Gastrocnemius medialis (tissue), 4 donors: ENCODE measurements at regions of chr6 and their contacts with region 1.

Region 1: GRCh38 chr6:139764498-139764986 is 390.1 kb upstream of the CITED2 start:
- DNase-seq: peak; percentile 76 to 85
- ATAC-seq: peak; percentile 95 to 98
- H3K4me3 ChIP-seq: no peak overlapping the region
- H3K27ac ChIP-seq: peak overlapping the region; percentile 84 to 93 (median 89)
- H3K4me1 ChIP-seq: peaks cover 50 to 55% of the 10 kb centered on the region in 2 donors
- H3K27me3 ChIP-seq: no peaks in the 10 kb centered on the region
- CTCF ChIP-seq: no peak
- POLR2A ChIP-seq: peak in 1 of 2 donors; percentile 49

Region 2: DNA sequence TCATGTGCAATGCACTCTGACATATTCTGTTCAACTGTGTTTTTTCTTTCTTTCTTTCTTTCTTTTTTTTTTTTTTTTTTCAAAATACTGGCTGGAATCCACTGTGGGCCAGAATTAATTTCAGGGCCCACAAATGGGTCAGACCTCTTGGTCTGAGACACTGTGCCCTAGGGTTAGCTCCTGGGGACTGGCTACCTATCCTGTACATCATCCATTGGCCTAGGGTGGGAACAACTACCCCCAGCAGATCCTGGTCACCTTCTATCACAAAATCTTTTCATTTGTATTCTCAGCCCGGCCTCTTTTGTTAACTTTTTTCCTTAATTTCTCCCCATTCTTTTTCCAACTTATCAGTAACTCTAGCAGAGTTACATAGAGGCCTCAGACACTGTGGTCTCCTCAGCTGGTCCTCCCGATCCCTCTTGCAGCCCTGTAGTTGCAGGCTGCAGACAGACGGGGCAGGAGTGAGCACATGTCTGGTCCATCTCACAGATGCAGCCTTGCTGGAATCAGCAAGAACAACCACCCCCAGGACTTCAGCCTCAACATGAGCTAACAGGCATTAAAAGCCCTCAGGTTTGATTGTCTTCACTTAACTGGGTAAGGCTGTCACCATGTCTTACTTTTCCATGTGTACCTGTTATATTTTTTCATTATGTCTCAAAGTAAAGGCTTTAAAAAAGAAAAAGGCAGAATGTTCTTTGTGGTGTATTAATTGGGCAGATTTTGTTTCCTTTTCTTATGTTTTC is 514.1 kb before region 1 on chr6:
- in situ Hi-C with region 1: loop called in 3 of 4 experiments (anchors 25 kb)
- intact Hi-C with region 1: no loop called
- DNase-seq: peak; percentile 38 to 73
- ATAC-seq: peak; percentile 59 to 84
- H3K4me3 ChIP-seq: peak overlapping the region in 1 of 4 donors; percentile 16
- H3K27ac ChIP-seq: peak overlapping the region; percentile 71 to 84 (median 82)
- H3K4me1 ChIP-seq: peaks cover 24 to 25% of the 10 kb centered on the region in 2 donors
- H3K27me3 ChIP-seq: no peaks in the 10 kb centered on the region
- CTCF ChIP-seq: peak; percentile 42 to 84 (median 73)
- POLR2A ChIP-seq: no peak

Region 3: GRCh38 chr6:139540276-139540675 is 224.3 kb before region 1 on chr6:
- in situ Hi-C with region 1: no loop called
- intact Hi-C with region 1: loop called (anchors 5 kb)
- DNase-seq: peak; percentile 19 to 46
- ATAC-seq: peak; percentile 30 to 34
- H3K4me3 ChIP-seq: peak overlapping the region in 1 of 4 donors; percentile 23
- H3K27ac ChIP-seq: peak overlapping the region; percentile 72 to 77 (median 74)
- H3K4me1 ChIP-seq: peaks cover 11 to 12% of the 10 kb centered on the region in 2 donors
- H3K27me3 ChIP-seq: no peaks in the 10 kb centered on the region
- CTCF ChIP-seq: no peak
- POLR2A ChIP-seq: no peak

Region 4: GRCh38 chr6:139834232-139834631 is 69.7 kb after region 1 on chr6:
- in situ Hi-C with region 1: loop called in 1 of 4 experiments (anchors 5 kb)
- intact Hi-C with region 1: loop called (anchors 2 kb)
- DNase-seq: peak in 1 of 2 donors; percentile 18
- ATAC-seq: peak; percentile 14 to 58
- H3K4me3 ChIP-seq: no peak overlapping the region
- H3K27ac ChIP-seq: no peak overlapping the region
- H3K4me1 ChIP-seq: peaks cover 20 to 25% of the 10 kb centered on the region in 2 donors
- H3K27me3 ChIP-seq: no peaks in the 10 kb centered on the region
- CTCF ChIP-seq: no peak
- POLR2A ChIP-seq: no peak

Region 5: GRCh38 chr6:140043336-140043735 is 278.8 kb after region 1 on chr6:
- in situ Hi-C with region 1: no loop called
- intact Hi-C with region 1: loop called (anchors 10 kb)
- DNase-seq: no peak
- ATAC-seq: peak; percentile 87 to 90
- H3K4me3 ChIP-seq: no peak overlapping the region
- H3K27ac ChIP-seq: peak overlapping the region; percentile 45 to 75 (median 55)
- H3K4me1 ChIP-seq: peaks cover 14 to 15% of the 10 kb centered on the region in 2 donors
- H3K27me3 ChIP-seq: no peaks in the 10 kb centered on the region
- CTCF ChIP-seq: no peak
- POLR2A ChIP-seq: no peak